Mammary epithelial cell (primary cell): ENCODE measurements at regions of chr21 and their contacts with region 1.

Region 1: GRCh38 chr21:36246080-36246631 is 73.8 kb upstream of the MORC3 start:
- DNase-seq: no peak
- H3K4me3 ChIP-seq: no peak overlapping the region
- H3K27ac ChIP-seq: no peak overlapping the region
- H3K4me1 ChIP-seq: no peaks in the 10 kb centered on the region
- H3K27me3 ChIP-seq: no peaks in the 10 kb centered on the region
- CTCF ChIP-seq: no peak

Region 2: GRCh38 chr21:36163750-36164741 is 82.1 kb before region 1 on chr21:
- CTCF ChIA-PET with region 1: no interaction called
- dilution Hi-C with region 1: loop called (anchors 5 kb)
- in situ Hi-C with region 1: no loop called
- intact Hi-C with region 1: no loop called
- DNase-seq: no peak
- H3K4me3 ChIP-seq: no peak overlapping the region
- H3K27ac ChIP-seq: no peak overlapping the region
- H3K4me1 ChIP-seq: no peaks in the 10 kb centered on the region
- H3K27me3 ChIP-seq: no peaks in the 10 kb centered on the region
- CTCF ChIP-seq: no peak

Region 3: GRCh38 chr21:36199021-36199420 is 47.1 kb before region 1 on chr21:
- CTCF ChIA-PET with region 1: no interaction called
- dilution Hi-C with region 1: loop called (anchors 5 kb)
- in situ Hi-C with region 1: no loop called
- intact Hi-C with region 1: no loop called
- DNase-seq: no peak
- H3K4me3 ChIP-seq: no peak overlapping the region
- H3K27ac ChIP-seq: no peak overlapping the region
- H3K4me1 ChIP-seq: peaks cover 19% of the 10 kb centered on the region
- H3K27me3 ChIP-seq: no peaks in the 10 kb centered on the region
- CTCF ChIP-seq: no peak